ENCODE measurements at regions of chr9 and their contacts with region 1.

Region 1: DNA sequence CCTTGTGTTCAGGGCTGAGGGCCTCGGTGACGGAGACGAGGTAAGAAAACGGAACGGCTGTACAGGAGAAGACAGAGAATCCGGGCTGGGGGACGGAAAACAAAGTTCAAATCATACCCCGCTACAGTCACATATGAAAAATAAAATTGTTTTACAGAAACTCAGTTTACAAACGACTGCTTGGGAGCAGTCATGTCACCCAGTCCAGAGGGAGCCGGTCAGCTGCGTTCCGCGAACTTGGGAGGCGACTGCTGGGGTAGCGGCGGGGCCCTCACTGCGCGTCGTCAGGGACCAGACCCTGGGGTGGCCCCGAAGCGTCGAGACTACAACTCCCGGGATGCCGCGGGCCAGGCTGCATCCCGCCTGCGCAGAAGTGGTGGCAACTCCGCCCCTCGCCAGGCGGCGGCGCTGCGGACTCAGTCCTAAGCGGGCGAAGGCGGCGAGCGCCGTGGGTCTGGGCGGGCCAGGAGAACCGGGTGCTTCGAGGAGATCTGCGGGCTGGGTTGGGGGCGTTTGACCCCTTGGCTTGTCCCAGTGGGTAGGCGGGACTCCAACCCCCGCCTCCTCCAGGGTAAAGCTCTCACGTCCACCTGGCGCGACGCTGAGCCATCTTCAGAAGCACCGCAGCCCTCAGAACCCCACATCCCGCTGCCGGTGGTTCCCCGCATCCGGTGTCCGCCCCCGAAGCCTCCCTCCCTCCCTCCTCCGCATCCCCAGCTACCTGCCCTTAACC is 4.0 kb downstream of the SIT1 start:
- DNase-seq: no peak
- H3K4me3 ChIP-seq: peak overlapping the region; percentile 48
- H3K27me3 ChIP-seq: no peaks in the 10 kb centered on the region
- CTCF ChIP-seq: peak; percentile 95

Region 2: DNA sequence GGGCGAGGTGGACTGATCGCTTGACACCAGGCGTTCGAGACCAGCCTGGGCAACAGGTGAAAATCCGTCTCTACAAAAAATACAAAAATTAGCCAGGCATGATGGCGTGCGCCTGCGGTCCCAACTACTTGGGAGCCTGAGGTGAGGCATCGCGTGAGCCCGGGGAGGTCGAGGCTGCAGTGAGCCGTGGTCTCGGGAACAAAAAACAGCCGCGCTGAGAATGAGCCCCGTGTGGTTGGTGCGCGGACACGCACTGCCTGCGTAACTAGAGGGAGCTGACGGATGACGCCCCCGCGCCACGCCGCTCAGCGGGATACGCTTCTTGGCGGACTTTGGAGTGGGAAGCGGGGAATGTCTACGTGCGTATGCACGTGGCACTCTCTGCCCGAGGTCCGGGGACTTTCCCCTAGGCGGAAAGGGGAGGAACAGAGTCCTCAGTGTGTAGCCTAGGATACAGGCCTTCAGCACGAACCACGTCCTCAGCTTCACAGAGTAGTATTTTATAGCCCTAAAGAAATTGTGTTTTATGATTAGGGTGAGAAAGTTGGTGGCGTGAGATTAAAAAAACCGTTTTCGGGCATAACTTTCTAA is 10.9 kb after region 1 on chr9 and contains the start of gene RMRP:
- CTCF ChIA-PET with region 1: interaction called, 43 read pairs
- POLR2A ChIA-PET with region 1: no interaction called
- DNase-seq: peak; percentile 98
- H3K4me3 ChIP-seq: peak within 1 kb of the TSS; percentile 69
- H3K27me3 ChIP-seq: no peaks in the 10 kb centered on the region
- CTCF ChIP-seq: peak; percentile 36; the same call in 1 of the 2 replicates
- polyA plus RNA-seq, gene RMRP: 235 and 1,738 TPM in 2 replicates

Region 3: GRCh38 chr9:35664531-35665470 is 18.1 kb after region 1 on chr9 and contains the start of gene ARHGEF39:
- CTCF ChIA-PET with region 1: interaction called, 10 read pairs
- POLR2A ChIA-PET with region 1: no interaction called
- DNase-seq: no peak
- H3K4me3 ChIP-seq: peak within 1 kb of the TSS; percentile 59
- H3K27me3 ChIP-seq: no peaks in the 10 kb centered on the region
- CTCF ChIP-seq: peak; percentile 41
- polyA plus RNA-seq, gene ARHGEF39: 2.7 and 4.1 TPM in 2 replicates

Region 4: DNA sequence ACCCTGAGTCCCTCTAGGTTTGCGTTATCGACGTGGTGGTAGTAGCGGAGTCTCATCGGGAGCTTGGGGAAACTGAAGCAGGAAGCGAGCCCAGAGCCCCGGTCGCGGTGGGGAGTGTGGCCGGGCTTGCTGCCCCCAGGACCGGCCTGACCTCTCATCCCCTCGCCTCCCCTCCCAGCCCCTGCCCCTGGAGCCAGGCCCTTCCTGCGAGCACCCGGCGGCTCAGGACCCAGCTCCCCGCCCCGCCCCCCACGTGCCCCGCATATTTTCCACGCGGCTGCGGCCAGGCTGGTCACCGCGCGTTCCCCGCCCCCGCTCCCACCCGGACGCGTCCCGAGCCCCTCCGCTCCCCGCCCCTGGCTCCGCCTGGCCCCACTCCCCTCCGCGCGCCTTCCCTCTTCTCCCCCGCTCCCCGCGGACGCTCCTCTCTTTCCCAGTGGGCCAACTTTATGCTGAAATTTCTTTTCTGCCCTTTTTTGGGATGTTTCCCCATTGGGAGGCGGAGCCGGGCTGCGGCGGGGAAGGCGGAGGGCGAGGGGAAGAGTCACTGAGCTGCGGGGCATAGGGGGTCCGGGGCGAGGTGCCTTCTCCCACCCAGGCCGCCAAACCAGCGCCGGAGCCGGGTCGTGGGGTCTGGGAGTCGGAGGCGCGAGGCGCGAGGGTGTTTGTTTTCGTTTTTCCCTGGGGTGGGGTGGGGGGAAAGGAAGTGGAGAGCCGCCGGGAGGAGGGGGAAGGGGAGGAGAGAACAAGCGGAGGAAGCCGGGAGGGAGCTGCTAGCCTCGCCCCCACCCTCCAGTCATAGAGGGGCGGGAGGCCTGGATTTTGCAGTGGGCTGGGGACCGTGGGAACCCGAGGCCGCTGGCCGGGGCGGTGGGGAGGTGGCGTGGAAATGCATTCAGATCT is 44.0 kb after region 1 on chr9:
- CTCF ChIA-PET with region 1: interaction called, 40 read pairs
- POLR2A ChIA-PET with region 1: interaction called, 3 read pairs
- DNase-seq: peak; percentile 26
- H3K4me3 ChIP-seq: peak overlapping the region; percentile 98
- H3K27me3 ChIP-seq: no peaks in the 10 kb centered on the region
- CTCF ChIP-seq: no peak